HCT116 (cell line): ENCODE measurements at regions of chr7 and their contacts with region 1.

Region 1: DNA sequence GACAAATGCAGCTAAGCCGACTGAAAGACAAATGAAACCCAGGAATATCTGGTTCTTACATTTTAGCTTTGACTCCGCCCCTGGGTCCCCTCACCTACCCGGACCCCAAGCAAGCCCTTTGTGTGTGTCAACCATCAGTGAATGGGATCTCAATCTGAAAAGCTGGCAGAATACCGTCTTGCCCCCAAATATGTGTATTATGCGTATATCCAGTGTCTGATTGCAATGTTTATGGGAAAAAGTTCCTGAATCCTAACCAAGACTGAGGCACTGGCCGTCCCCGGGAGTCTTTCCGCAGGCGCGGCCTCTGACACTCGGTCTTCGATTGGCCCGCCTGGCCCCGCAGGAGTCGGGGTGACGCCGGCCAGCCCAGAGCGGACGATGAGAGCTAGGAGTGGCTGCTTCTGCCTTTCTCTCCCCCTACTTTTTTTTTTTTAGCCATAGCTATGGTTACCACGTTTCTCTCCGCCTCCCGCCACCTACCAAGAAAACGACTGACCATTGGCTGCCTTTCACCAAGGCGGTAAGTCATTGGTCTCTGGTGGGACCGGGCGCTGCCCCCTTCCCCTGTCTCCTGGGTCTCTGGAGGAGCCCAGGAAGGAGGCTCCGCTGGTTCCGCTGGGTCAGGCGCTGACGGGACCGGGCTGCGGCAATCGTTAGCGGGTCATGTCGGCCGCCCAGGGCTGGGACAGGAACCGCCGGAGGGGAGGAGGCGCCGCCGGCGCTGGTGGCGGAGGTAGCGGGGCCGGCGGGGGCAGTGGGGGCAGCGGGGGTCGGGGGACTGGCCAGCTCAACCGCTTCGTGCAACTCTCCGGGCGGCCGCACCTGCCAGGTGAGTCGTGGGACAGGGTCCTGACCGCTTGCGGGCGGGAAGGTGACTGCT is at the start of gene KLHDC10:
- DNase-seq: peak; percentile 98
- ATAC-seq: peak; percentile 87
- H3K4me3 ChIP-seq: peak within 1 kb of the TSS; percentile 91 to 93
- H3K27ac ChIP-seq: peak within 1 kb of the TSS; percentile 47
- H3K4me1 ChIP-seq: peaks cover 8 to 20% of the 10 kb centered on the region in 2 experiments
- H3K27me3 ChIP-seq: no peaks in the 10 kb centered on the region
- CTCF ChIP-seq: no peak
- POLR2A ChIP-seq: peak; percentile 62
- RAD21 ChIP-seq: no peak
- total RNA-seq, gene KLHDC10: 25.8 TPM

Region 2: DNA sequence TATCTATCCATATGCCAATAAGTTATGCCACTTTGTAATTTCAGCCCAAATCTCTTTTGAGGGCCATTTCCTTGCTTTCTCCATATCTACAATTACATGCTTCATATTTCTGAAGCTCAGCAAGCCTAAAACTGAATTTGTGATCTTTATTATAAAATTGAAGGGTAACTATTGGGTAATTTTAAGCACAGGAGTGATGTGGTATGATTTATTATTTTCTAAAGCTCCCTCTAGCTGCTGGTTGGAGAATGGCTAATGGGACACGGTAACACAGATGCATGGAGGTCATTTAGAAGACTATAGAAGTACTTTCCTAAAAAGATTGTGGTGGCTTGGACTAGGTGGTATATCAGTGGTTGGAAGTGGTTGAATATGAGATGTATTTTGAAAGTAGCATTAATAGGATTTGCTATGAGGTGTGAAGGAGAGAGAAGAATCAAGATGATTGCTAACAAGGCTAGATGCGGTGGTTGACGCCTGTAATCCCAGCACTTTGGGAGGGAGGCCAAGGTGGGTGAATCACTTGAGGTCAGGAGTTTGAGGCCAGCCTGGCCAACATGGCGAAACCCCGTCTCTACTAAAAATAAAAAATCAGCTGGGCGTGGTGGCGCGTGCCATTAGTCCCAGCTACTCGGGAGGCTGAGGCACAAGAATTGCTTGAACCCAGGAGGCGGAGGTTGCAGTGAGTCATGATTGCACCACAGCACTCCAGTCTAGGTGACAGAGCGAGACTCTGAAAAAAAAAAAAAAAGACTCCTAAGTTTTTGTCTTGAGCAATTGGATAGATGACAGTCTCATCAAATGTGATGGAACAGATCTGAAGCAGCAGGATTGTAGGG is 14.0 kb after region 1 on chr7:
- CTCF ChIA-PET with region 1: interaction called, 14 read pairs
- POLR2A ChIA-PET with region 1: no interaction called
- RAD21 ChIA-PET with region 1: interaction called in 1 of 2 experiments, 7 read pairs
- intact Hi-C with region 1: no loop called
- DNase-seq: no peak
- ATAC-seq: peak; percentile 89
- H3K4me3 ChIP-seq: no peak overlapping the region
- H3K27ac ChIP-seq: no peak overlapping the region
- H3K4me1 ChIP-seq: peaks cover 3 to 20% of the 10 kb centered on the region in 2 experiments; a peak in 3 of 4 replicates
- H3K27me3 ChIP-seq: no peaks in the 10 kb centered on the region
- CTCF ChIP-seq: peak in 2 of 3 experiments; percentile 83 to 84; a peak in 4 of 6 replicates
- POLR2A ChIP-seq: no peak
- RAD21 ChIP-seq: peak; percentile 28

Region 3: DNA sequence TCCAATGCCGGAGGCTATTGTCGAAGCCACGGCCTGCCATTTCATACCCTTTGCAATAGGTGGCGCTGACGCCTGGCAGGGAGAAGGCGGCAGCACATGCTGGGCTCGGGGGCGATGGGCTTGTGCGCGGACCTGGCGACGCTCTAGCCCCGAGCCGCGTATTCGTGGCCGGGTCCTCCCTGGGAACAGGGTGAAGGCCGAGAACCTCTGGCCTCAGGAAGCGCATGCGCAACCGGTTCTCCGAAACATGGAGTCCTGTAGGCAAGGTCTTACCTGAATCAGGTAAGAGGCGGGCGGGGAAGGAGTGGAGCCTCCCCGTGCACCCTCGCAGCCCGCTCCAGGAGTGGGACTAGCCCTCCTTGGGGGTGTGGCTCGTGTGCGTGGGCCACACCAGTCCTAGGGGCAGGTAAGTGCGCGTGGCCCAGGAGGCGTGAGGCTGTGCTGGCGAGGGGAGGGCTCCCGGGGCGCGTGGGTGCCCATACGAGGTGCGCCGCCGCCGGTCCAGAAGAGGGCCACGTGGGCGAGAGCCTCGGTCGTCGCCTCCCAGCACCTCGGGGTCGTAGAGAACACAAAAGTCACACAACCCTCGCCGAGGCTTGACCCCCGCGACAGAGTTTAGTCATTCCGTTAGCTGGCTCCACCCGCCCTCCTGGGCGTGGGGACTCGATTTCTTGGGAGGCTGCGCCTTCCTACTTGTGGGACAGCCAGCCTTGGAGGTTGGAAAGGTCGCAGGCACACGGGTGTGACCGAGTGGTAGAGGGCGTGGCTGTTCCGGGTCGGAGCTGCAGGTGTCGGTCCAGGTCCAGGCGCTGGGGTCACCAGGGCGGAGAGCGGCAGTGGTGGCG is 416.1 kb after region 1 on chr7:
- CTCF ChIA-PET with region 1: no interaction called
- POLR2A ChIA-PET with region 1: no interaction called
- RAD21 ChIA-PET with region 1: no interaction called
- intact Hi-C with region 1: loop called (anchors 5 kb)
- DNase-seq: peak; percentile 78
- ATAC-seq: peak; percentile 93
- H3K4me3 ChIP-seq: peak overlapping the region; percentile 53 to 62
- H3K27ac ChIP-seq: peak overlapping the region; percentile 61
- H3K4me1 ChIP-seq: peaks cover 0 to 20% of the 10 kb centered on the region in 2 experiments; a peak in 1 of 4 replicates
- H3K27me3 ChIP-seq: no peaks in the 10 kb centered on the region
- CTCF ChIP-seq: peak; percentile 60 to 74 (median 72); a peak in 5 of 6 replicates
- POLR2A ChIP-seq: no peak
- RAD21 ChIP-seq: peak; percentile 65

Region 4: DNA sequence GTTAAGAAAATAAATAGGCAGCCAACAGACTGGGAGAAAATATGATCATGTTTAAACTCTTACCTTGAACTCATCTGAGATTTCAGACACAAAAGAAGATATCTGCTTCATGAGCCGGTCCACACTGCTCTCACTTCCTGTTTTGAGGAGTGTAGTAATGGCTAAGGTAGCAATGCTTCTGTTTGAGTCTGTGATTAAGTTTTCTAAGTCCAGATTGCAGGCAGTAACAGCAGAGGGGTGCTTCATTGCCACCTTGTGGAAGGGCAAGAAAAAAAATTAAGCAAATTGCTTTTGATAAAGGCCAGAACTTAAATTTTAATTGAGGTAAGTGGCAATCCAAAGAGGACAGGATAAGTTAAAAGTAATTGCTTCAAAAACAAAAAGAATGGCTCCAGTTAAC is 490.8 kb after region 1 on chr7:
- CTCF ChIA-PET with region 1: no interaction called
- POLR2A ChIA-PET with region 1: no interaction called
- RAD21 ChIA-PET with region 1: no interaction called
- intact Hi-C with region 1: loop called (anchors 1 kb)
- DNase-seq: peak; percentile 26
- ATAC-seq: peak; percentile 83
- H3K4me3 ChIP-seq: no peak overlapping the region
- H3K27ac ChIP-seq: no peak overlapping the region
- H3K4me1 ChIP-seq: no peaks in the 10 kb centered on the region
- H3K27me3 ChIP-seq: no peaks in the 10 kb centered on the region
- CTCF ChIP-seq: peak; percentile 41 to 68 (median 54); a peak in 4 of 6 replicates
- POLR2A ChIP-seq: no peak
- RAD21 ChIP-seq: peak; percentile 87

Region 5: DNA sequence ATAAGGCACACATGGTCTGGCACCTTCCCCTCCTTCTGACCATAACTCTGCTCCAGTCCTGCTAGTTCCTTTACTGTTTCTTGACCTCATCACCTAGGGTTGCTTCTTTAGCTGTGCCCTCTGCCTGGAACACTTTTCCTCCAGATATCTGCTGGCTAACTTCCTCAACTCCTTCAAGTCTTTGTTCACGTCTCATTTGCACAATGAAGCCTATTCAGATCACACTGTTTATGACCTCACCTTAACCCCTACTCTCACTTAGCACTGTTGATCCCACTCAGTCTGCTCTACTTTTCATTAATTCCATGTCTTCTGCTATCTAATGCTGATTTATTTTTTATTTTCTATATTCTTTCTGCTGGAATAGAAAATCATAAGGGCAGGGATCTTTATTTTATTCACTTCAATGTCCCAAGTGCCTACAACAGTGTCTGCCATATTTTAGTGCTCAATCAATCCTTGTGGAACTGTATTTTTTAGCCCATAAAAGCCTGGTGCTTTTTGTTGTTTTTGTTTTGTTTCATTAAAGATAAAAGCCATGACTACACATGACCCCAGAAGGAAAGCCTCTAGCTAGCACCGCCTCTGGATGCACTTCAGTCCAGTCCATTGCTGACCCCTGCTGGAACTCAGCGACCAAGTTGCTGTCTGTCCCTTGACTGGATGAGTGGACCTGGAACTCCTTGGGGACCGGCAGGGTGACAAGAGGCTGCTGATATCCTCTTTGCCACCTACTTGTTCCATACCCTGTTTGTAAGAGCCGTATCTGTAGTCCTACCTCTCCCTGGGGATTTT is 651.5 kb after region 1 on chr7:
- CTCF ChIA-PET with region 1: interaction called, 19 read pairs
- POLR2A ChIA-PET with region 1: no interaction called
- RAD21 ChIA-PET with region 1: no interaction called
- intact Hi-C with region 1: loop called (anchors 1 kb)
- DNase-seq: peak; percentile 70
- ATAC-seq: peak; percentile 100
- H3K4me3 ChIP-seq: no peak overlapping the region
- H3K27ac ChIP-seq: no peak overlapping the region
- H3K4me1 ChIP-seq: no peaks in the 10 kb centered on the region
- H3K27me3 ChIP-seq: no peaks in the 10 kb centered on the region
- CTCF ChIP-seq: peak; percentile 68 to 81 (median 70)
- POLR2A ChIP-seq: no peak
- RAD21 ChIP-seq: peak; percentile 95

Region 6: DNA sequence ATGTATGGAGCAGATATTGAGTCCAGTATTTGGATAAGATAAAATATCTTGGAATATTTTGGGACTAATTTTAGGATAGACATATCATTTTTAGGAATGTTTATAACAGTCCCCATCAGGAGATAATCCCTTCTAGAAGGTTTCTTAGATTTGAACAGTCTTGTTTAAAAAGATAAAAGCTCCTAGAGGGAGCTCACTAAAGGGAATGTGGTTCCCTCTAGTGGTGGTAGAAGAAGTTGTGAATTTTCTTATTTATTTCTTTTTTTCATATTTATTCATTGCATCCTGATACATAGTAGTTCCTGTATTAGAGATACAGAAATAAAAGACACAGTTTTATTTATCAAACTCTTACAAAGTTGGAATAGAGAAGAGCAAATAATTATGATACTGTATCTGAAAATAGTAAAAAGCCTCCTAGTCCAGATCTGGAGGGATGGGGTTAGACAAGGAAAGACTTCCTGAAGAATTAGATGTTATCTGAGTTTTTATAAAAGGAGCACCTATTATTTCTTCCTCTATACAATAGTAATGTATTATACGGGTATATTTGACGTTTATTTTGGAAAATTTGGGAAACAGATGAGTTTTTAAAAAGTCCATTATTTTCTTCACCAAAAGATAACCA is 688.3 kb after region 1 on chr7:
- CTCF ChIA-PET with region 1: interaction called, 32 read pairs
- POLR2A ChIA-PET with region 1: no interaction called
- RAD21 ChIA-PET with region 1: interaction called, 4 to 6 read pairs
- intact Hi-C with region 1: loop called (anchors 1 kb)
- DNase-seq: peak; percentile 37
- ATAC-seq: peak; percentile 74
- H3K4me3 ChIP-seq: no peak overlapping the region
- H3K27ac ChIP-seq: no peak overlapping the region
- H3K4me1 ChIP-seq: no peaks in the 10 kb centered on the region
- H3K27me3 ChIP-seq: no peaks in the 10 kb centered on the region
- CTCF ChIP-seq: peak; percentile 55 to 81 (median 77)
- POLR2A ChIP-seq: no peak
- RAD21 ChIP-seq: peak; percentile 80

Region 7: DNA sequence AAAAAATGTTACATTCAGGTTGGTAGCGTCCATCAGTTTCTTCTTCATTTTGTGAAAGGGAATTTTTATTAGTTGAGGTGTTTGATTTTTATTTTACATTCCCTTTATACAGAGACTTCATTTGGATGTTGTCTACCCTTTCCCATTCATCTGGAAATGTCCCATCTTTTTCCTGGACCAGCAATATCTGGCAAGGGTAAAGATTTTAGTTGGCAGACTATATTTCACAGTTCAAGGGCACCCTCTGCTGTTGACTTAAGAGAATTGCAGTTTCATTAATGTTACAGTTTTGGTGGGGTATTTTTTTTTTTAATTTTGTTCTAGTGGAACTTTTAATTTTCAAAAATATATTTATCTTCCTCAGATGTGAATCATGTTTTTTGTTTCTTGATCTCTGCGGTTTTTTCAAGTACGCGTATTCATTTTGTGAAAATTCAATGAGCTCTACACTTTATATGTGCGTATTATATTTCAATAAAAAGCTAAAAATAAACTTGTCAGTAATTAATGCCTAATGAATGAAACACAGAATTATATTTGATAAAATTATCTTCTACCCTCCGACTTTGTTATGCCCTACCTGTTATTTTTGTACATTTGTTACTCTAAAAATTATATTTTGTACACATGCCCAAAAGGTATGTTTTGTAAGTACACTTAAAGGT is 761.7 kb after region 1 on chr7:
- CTCF ChIA-PET with region 1: interaction called, 5 read pairs
- POLR2A ChIA-PET with region 1: no interaction called
- RAD21 ChIA-PET with region 1: no interaction called
- intact Hi-C with region 1: loop called (anchors 2 kb)
- DNase-seq: peak; percentile 41
- ATAC-seq: 0 out of 2 replicates have a peak, but pooled peaks have one; percentile 47
- H3K4me3 ChIP-seq: no peak overlapping the region
- H3K27ac ChIP-seq: peak overlapping the region; percentile 2; the same call in 1 of the 2 replicates
- H3K4me1 ChIP-seq: peaks cover 0 to 19% of the 10 kb centered on the region in 2 experiments; a peak in 2 of 4 replicates
- H3K27me3 ChIP-seq: no peaks in the 10 kb centered on the region
- CTCF ChIP-seq: peak; percentile 60 to 84 (median 66); a peak in 5 of 6 replicates
- POLR2A ChIP-seq: no peak
- RAD21 ChIP-seq: peak; percentile 87